ENCODE measurements at regions of chr13 and their contacts with region 1.

Region 1: GRCh38 chr13:41515491-41516139 is 58.3 kb downstream of the RGCC start:
- DNase-seq: no peak
- H3K4me3 ChIP-seq: no peak overlapping the region
- H3K27ac ChIP-seq: no peak overlapping the region
- H3K4me1 ChIP-seq: no peaks in the 10 kb centered on the region
- H3K27me3 ChIP-seq: no peaks in the 10 kb centered on the region
- CTCF ChIP-seq: no peak

Region 2: DNA sequence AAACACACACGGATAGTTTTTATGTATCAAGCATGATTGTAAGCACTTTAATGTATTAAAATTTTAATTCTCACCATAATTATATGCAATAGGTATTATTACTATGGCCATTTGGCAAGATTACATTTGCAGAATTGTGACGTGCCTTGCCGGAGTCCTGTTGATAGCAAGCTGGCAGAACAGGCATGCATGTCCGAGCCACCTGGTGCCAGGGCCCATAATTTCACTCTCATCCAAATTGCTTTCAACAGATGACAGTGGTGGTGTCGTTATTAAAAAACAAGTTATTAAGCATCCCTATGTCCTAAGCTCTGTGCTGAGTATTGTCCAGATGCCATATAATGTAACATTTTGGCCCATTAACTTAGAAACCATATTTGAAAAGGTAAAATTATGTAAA is 1223.5 kb before region 1 on chr13:
- CTCF ChIA-PET with region 1: no interaction called
- dilution Hi-C with region 1: no loop called
- in situ Hi-C with region 1: no loop called
- intact Hi-C with region 1: no loop called
- DNase-seq: no peak
- H3K4me3 ChIP-seq: no peak overlapping the region
- H3K27ac ChIP-seq: no peak overlapping the region
- H3K4me1 ChIP-seq: no peaks in the 10 kb centered on the region
- H3K27me3 ChIP-seq: no peaks in the 10 kb centered on the region
- CTCF ChIP-seq: no peak

Region 3: DNA sequence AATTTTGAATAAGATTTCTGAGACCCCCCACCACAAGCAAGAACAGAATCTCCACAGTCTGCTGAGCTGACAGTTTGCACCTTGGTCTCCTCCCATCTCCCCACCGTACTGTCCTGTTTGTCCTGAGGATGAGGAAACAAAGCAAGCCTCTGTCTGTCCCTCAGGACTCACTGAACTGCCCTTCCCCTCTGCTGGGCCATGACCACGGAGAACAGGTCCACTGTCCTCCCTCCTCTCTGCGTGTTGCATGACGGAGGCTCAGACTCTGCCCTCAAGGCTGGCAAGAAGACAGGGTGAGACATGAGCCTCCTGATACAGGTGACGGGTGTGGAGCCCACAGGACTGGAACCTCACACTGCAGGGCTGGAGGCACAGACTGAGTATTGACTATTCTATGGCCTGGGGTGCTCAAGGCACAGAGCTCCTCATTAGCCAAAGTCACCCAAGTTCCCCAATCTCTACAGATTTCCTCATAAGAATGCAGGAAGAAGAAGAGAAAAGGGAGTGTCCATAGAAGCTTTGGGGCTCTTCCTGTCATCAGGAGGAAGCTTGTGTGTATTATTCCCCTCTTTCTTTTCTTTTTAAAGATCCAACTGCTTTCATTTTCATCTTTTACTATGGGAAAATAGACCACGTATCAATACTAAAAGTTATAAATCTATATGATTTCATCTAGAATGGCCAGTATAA is 80.6 kb before region 1 on chr13:
- CTCF ChIA-PET with region 1: no interaction called
- dilution Hi-C with region 1: loop called (anchors 5 kb)
- in situ Hi-C with region 1: no loop called
- intact Hi-C with region 1: no loop called
- DNase-seq: no peak
- H3K4me3 ChIP-seq: no peak overlapping the region
- H3K27ac ChIP-seq: no peak overlapping the region
- H3K4me1 ChIP-seq: no peaks in the 10 kb centered on the region
- H3K27me3 ChIP-seq: peaks cover 2% of the 10 kb centered on the region
- CTCF ChIP-seq: no peak

Region 4: DNA sequence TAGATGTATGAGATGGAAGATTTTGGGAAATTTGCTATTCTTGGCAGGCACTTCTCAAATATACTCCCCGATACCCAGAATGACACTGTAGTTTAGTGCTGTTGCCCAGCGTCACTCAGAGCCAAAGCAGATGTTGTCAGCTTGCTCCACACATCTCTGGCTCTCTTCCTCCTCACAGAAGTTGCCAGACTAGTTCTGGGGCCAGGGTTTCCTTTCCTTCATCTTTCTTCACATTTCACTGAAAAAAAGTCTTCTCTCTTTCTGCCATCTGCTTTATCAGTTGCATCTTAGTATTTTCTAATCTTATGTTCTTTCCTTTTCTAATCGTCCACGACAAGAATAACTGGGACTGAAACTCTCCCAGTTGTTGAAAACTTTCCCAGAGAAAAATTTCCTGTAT is 193.1 kb after region 1 on chr13:
- CTCF ChIA-PET with region 1: no interaction called
- dilution Hi-C with region 1: no loop called
- in situ Hi-C with region 1: no loop called
- intact Hi-C with region 1: no loop called
- DNase-seq: no peak
- H3K4me3 ChIP-seq: no peak overlapping the region
- H3K27ac ChIP-seq: no peak overlapping the region
- H3K4me1 ChIP-seq: no peaks in the 10 kb centered on the region
- H3K27me3 ChIP-seq: no peaks in the 10 kb centered on the region
- CTCF ChIP-seq: no peak